AG04450 (cell line): ENCODE measurements at regions of chr11 and their contacts with region 1.

Region 1: DNA sequence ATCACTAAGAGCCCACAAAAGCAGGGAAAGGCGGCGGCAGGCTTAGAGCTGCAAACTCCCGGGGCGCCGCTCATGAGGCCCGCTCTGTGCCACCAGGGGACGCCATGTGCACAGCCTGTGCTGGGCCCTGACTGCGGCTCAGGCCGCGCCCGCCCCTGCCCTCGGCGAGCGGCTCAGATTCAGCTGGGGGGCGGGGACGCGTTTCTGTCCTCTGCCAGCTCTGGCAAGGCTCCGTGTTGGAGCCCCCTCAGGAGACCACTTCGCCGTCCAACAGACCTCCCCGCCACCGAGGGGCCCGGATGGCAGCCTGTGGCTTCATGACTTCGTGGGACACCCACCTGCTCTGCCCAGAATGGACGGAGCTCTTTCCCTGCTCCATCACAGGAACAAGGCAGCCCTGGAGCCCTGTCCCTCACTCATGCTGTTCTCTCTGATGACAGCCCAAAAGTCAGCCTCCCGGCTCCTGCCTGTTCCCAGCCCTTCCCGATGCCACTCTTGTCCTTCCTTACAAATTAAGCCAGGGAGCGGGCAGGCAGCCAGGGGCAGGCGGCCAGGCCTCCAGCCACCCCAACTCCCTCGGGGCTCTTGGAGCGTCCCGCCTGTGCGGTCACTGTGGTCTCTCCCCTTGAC is 69.1 kb downstream of the NAT10 start:
- DNase-seq: no peak
- H3K4me3 ChIP-seq: peak overlapping the region; percentile 49
- H3K27ac ChIP-seq: no peak overlapping the region
- H3K27me3 ChIP-seq: peaks cover 5% of the 10 kb centered on the region
- CTCF ChIP-seq: peak; percentile 97

Region 2: DNA sequence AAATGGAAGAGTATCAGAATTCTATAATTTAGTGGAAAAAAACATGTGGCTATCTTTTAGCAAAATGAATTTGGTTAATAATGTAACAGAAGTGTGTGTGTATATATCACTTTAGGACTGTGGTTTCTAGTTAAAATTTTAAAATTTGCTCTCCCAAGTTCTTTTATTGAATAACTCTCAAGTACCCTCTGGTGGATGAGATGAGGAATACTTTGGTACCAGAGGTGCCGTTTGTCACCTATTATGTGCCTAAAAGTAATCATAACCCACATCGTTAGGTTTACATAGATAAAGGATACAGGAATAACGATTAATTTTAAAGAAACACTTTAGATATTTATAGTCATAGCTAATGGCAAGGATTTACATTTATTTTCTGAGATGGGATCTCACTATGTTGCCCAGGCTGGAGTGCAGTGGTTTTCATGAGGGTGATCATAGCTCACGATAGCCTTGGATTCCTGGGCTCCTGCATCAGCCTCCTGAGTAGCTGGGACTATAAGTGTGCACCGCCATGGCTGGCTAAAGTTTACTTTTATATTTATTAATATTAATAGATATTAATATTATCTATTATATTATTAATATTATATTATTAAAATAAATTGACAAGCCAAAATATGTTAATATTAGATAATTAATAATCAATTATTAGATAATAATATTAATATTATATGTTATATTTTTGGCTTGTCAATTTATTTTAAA is 189.7 kb before region 1 on chr11:
- CTCF ChIA-PET with region 1: no interaction called
- POLR2A ChIA-PET with region 1: no interaction called
- DNase-seq: no peak
- H3K4me3 ChIP-seq: no peak overlapping the region
- H3K27ac ChIP-seq: no peak overlapping the region
- H3K27me3 ChIP-seq: peaks cover 6% of the 10 kb centered on the region
- CTCF ChIP-seq: peak; percentile 24; the same call in 1 of the 2 replicates

Region 3: DNA sequence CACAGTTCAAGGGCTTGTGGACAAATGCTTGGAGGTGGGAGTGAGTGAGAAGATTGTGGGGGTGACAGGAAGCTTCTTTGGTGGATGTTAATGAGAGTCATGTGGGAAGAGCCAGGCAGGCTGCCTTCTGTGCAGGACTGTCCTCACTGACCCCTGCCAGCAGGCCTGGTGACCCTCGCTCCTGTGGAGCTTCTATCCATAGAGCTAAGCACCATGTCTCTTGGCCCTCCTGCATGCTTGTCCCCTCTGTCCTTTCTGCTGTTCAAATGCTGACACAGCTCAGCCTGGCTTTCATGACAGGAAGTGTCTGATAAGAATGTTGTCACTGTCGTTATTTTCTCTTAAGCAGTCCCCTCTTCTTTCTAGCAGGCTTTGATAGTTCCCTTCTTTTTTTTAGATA is 31.5 kb before region 1 on chr11:
- CTCF ChIA-PET with region 1: interaction called, 14 read pairs
- POLR2A ChIA-PET with region 1: no interaction called
- DNase-seq: no peak
- H3K4me3 ChIP-seq: no peak overlapping the region
- H3K27ac ChIP-seq: no peak overlapping the region
- H3K27me3 ChIP-seq: no peaks in the 10 kb centered on the region
- CTCF ChIP-seq: no peak

Region 4: DNA sequence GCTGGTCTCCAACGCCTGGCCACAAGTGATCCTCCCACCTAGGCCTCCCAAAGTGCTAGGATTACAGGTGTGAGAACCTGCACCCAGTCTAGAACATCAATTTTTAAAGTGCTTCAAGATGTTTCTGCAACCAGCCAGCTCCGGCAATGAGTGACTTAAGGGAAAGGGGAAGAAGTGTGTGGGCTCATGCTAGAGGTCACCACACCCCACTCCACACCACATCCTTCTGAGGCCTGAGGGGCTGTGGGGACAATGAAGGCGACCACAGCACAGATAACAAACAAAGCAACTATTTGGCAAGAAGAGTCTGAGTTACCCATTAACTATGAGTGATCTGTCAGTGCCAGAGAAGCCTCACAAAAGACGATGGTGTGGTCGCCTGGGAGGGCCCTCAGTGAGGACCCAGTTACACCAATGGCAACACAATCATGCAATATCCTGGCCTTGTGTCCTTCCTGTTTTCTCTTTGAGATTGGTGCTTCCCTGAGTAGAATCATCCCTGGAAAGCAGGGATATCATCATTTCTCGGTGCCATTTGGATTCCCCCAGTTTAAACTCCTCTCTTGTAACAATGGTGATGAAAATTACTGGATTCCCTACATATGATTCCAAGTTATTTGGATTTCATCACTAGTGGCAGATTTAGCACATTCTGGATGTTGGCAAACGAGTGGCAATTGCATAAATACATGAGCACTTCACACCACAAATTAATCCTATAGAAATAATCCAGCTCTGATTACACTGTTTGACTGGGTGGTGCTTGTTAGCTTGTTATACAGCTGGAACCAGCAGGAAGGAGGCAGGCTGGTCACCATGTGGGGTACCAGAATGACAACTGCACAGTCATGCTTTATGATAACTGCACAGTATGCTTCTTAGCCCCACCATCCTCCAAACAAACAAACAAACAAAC is 164.9 kb after region 1 on chr11:
- CTCF ChIA-PET with region 1: interaction called, 10 read pairs
- POLR2A ChIA-PET with region 1: no interaction called
- DNase-seq: no peak
- H3K4me3 ChIP-seq: no peak overlapping the region
- H3K27ac ChIP-seq: no peak overlapping the region
- H3K27me3 ChIP-seq: peaks cover 19% of the 10 kb centered on the region
- CTCF ChIP-seq: no peak

Region 5: DNA sequence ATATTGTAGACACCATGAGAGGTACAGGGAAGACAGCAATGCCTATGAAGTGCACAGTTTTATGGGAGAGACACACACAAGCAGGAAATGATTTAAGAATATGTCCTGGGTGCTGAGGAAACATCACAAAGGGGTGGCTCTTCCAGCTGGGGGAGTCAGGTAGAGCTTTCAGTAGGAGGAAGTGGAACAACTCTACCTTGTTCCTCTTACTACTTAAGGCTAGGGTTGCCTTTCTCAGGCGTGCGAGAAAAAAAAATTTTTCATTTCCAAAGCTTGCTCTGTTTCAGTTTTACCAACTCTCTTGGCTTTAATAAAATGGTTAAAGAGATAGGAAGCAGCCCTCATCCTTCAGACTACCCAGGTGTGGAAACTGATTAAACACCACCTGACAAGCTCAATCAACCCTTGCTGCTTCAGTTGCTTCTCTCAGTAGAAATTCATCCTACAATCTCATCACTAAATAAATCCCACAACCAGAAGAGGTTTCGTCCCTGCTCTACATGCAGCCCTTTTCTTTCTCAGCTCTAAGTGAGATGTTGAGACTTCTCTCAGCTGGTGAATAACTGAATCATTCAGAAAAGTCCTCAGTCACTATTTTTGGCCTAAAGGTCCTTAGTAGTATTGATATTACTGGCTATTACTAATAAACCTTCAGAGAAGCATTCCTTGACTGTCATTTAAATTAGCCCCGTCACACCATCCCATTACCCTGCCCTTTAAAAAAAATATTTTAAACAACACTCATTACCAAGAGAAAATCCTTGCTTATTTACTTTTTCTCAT is 177.4 kb after region 1 on chr11:
- CTCF ChIA-PET with region 1: interaction called, 77 read pairs
- POLR2A ChIA-PET with region 1: interaction called, 17 read pairs
- DNase-seq: no peak
- H3K4me3 ChIP-seq: no peak overlapping the region
- H3K27ac ChIP-seq: no peak overlapping the region
- H3K27me3 ChIP-seq: peaks cover 20% of the 10 kb centered on the region
- CTCF ChIP-seq: no peak

Region 6: DNA sequence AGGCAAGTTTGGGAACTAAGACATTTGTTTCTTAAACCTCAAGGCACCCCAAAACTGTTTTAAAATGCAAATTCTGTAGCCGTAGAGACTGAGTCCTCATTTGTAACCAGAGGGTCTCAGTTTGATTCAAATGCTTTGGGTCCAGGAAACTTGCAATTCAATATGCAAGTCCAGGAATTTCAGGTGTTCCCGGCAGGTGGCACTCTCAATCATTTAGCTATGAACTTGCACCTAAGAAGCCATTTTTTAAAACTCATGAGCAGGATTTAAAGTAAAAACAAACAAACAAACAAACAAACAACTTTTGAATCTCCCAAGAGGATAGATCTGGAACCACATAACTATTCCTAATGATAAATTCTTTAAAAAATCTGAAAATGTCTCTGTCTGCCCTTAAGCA is 192.0 kb after region 1 on chr11:
- CTCF ChIA-PET with region 1: interaction called, 61 read pairs
- POLR2A ChIA-PET with region 1: no interaction called
- DNase-seq: no peak
- H3K4me3 ChIP-seq: no peak overlapping the region
- H3K27ac ChIP-seq: no peak overlapping the region
- H3K27me3 ChIP-seq: peaks cover 6% of the 10 kb centered on the region
- CTCF ChIP-seq: no peak